ENCODE measurements at regions of chr7 and their contacts with region 1.

Region 1: DNA sequence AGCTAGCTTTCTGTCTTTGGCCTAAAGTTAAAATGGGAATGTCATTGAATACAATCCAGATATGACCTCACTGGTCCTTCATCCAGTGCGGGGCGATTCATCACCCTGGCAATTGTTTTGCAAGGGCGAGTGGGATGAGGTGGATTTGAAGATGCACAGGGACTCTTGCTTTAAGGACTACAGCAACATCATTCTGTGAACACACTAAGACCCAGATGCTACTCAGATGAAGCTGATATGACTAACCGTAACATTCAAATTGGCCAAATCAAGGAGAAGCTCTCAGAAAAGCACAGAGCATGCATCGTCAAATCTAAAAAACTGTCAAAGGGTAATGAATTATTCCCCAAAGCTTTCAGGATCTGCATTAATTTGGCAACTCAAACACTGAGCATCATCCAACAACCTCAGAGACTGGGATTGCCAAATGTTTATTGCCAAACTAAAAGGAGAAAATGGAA is 12.8 kb downstream of the CPA1 start:
- DNase-seq: no peak
- ATAC-seq: no peak
- H3K4me3 ChIP-seq: no peak overlapping the region
- H3K4me3 Mint-ChIP-seq: peak overlapping the region in 5 of 10 donors; percentile 13 to 84 (median 76)
- H3K27ac ChIP-seq: no peak overlapping the region
- H3K27ac Mint-ChIP-seq: peak overlapping the region in 7 of 9 donors; percentile 14 to 93 (median 88)
- H3K4me1 ChIP-seq: peaks cover 0 to 14% of the 10 kb centered on the region in 2 donors
- H3K4me1 Mint-ChIP-seq: peaks cover 19 to 40% (median 34%) of the 10 kb centered on the region in 7 donors
- H3K27me3 ChIP-seq: no peaks in the 10 kb centered on the region
- H3K27me3 Mint-ChIP-seq: no peaks in the 10 kb centered on the region

Region 2: DNA sequence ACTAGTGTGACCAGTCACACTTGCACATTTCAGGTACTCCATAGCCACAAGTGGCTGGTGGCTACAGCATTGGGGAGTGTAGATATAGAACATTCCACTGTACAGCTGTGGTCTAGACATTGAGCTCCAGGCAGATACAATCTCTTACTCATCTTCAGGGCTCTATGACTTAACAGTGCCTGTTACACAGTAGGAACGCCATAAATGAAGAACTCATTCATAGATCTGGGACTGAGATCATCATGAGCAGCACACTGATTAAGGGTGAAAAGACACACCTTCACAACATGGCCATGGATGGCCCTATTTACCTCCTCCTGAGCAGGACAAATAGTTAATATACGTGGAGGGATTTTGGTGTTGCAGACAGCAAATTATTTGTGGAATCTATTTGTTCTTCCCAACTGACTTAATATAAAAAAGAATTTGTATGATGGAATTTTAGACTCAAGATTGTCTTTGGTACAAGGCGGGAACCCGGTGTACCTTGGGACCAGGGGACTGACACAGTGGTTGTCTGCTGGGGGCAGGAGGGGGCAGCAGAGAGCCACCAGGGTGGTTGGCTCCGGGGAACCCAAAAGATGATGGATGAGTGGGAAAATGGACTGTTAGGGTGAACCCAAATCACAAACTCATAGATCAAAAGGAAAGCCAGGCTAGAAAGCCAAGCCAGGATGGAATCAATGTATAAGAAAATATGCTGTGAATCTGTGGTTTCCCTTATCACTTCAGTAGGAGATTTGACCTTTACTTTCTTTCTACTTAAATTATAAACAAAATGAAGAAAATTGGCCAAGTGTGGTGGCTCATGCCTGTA is 150.7 kb before region 1 on chr7:
- CTCF ChIA-PET with region 1: no interaction called
- POLR2A ChIA-PET with region 1: no interaction called
- intact Hi-C with region 1: loop called in 1 of 2 experiments (anchors 5 kb)
- DNase-seq: peak; percentile 35 to 67 (median 47)
- ATAC-seq: peak; percentile 77
- H3K4me3 ChIP-seq: no peak overlapping the region
- H3K4me3 Mint-ChIP-seq: peak overlapping the region in 1 of 10 donors; percentile 66
- H3K27ac ChIP-seq: no peak overlapping the region
- H3K27ac Mint-ChIP-seq: peak overlapping the region in 1 of 9 donors; percentile 68
- H3K4me1 ChIP-seq: no peaks in the 10 kb centered on the region
- H3K4me1 Mint-ChIP-seq: peaks cover 0 to 12% (median 8%) of the 10 kb centered on the region in 7 donors
- H3K27me3 ChIP-seq: no peaks in the 10 kb centered on the region
- H3K27me3 Mint-ChIP-seq: peaks cover 0 to 11% (median 0%) of the 10 kb centered on the region in 5 donors

Region 3: DNA sequence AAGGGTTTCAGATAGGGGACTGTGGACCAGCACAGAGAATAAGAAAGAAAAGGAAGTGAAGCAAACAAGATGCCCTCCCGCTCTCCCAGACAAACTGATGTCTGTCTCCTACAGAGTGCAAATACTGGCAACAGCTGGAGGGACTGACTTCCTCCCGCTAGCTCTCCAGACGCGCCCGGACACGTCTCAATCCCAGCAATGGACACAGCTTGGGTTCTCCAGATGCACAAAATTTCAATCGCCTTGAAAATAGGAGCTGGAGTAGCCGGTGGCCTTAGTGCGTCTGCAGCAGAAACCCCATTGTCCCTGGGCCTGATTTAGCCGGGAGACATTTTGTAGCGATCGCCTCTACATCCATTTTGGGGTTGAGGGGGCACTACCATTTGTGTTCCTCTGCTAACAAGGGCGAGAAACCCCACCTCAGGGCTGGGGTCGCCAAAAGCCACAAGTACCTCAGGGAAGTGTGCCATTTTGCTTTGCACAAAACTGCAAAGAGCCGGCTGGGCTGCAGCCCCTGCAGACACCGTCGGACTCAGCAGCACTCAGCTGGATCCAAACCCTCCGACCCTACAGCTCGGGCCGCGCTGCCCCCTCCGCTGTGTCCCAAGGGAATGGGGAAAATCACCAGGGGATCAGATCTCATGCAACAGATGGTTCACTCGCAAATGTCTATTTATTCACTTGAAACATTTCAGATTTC is 120.6 kb before region 1 on chr7:
- CTCF ChIA-PET with region 1: no interaction called
- POLR2A ChIA-PET with region 1: no interaction called
- intact Hi-C with region 1: no loop called
- DNase-seq: no peak
- ATAC-seq: no peak
- H3K4me3 ChIP-seq: peak overlapping the region; percentile 28
- H3K4me3 Mint-ChIP-seq: peak overlapping the region in 9 of 10 donors; percentile 25 to 91 (median 78)
- H3K27ac ChIP-seq: no peak overlapping the region
- H3K27ac Mint-ChIP-seq: peak overlapping the region in 3 of 9 donors; percentile 14 to 40 (median 15)
- H3K4me1 ChIP-seq: peaks cover 0 to 5% of the 10 kb centered on the region in 2 donors
- H3K4me1 Mint-ChIP-seq: peaks cover 0 to 29% (median 13%) of the 10 kb centered on the region in 7 donors
- H3K27me3 ChIP-seq: no peaks in the 10 kb centered on the region
- H3K27me3 Mint-ChIP-seq: peaks cover 0 to 6% (median 0%) of the 10 kb centered on the region in 5 donors

Region 4: GRCh38 chr7:130421684-130422083 is 28.6 kb after region 1 on chr7:
- CTCF ChIA-PET with region 1: no interaction called
- POLR2A ChIA-PET with region 1: interaction called, 6 read pairs
- intact Hi-C with region 1: loop called in 1 of 2 experiments (anchors 1 kb)
- DNase-seq: no peak
- ATAC-seq: no peak
- H3K4me3 ChIP-seq: no peak overlapping the region
- H3K4me3 Mint-ChIP-seq: peak overlapping the region in 9 of 10 donors; percentile 10 to 75 (median 64)
- H3K27ac ChIP-seq: peak overlapping the region; percentile 23
- H3K27ac Mint-ChIP-seq: peak overlapping the region; percentile 6 to 94 (median 68)
- H3K4me1 ChIP-seq: peaks cover 0 to 68% of the 10 kb centered on the region in 2 donors
- H3K4me1 Mint-ChIP-seq: peaks cover 32 to 88% (median 85%) of the 10 kb centered on the region in 7 donors
- H3K27me3 ChIP-seq: no peaks in the 10 kb centered on the region
- H3K27me3 Mint-ChIP-seq: no peaks in the 10 kb centered on the region

Region 5: DNA sequence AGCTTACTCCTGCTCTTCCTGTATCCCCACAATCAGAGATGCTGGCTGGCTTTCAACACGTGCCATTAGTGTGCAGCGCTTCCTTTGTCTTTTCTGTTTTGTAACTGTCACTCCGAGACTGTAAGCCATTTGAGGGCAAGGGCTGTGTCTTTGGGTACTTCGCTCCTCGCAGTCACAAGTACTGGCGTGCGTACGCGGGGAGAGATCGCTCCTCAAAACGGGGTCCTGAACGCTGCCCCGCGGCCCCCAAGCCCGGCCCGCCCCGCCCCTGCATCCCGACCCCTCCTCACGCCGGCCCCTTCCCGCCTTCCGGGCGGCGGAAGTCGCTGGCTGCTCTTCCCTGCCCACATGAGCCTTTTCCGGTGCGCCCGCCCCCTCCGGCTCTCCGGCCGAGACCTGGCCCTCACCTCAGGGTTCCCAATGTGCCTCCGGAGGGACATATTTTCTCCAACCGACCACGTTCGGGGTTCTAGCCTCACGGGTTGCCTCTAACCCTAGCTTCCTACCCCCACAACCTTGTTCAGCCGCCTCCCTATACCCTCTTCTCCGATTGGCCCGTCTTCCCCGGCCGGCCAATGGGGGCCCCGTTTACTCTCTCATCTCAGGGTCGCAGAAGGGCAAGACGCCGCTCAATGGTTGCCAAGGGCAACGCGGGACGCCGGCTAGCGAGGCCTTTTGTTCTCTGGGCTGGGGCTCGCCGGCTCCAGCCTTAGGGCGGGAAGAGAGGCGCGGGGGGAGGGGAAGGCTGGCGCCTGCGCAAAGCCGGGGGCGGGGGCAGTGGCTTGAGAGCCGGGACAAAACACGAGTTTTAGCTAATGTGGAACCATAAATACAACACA is 47.6 kb after region 1 on chr7 and contains the start of gene CEP41:
- CTCF ChIA-PET with region 1: no interaction called
- POLR2A ChIA-PET with region 1: interaction called, 14 read pairs
- intact Hi-C with region 1: loop called in 1 of 2 experiments (anchors 1 kb)
- DNase-seq: peak; percentile 85 to 90 (median 89)
- ATAC-seq: peak; percentile 98
- H3K4me3 ChIP-seq: peak within 1 kb of the TSS; percentile 87
- H3K4me3 Mint-ChIP-seq: peak within 1 kb of the TSS; percentile 95 to 100 (median 98)
- H3K27ac ChIP-seq: peak within 1 kb of the TSS; percentile 76
- H3K27ac Mint-ChIP-seq: peak within 1 kb of the TSS; percentile 95 to 99 (median 96)
- H3K4me1 ChIP-seq: peaks cover 4 to 26% of the 10 kb centered on the region in 2 donors
- H3K4me1 Mint-ChIP-seq: peaks cover 26 to 71% (median 59%) of the 10 kb centered on the region in 7 donors
- H3K27me3 ChIP-seq: no peaks in the 10 kb centered on the region
- H3K27me3 Mint-ChIP-seq: peaks cover 0 to 4% (median 0%) of the 10 kb centered on the region in 5 donors
- total RNA-seq, gene CEP41: 6.9 to 16.0 (median 12.6) TPM

Region 6: DNA sequence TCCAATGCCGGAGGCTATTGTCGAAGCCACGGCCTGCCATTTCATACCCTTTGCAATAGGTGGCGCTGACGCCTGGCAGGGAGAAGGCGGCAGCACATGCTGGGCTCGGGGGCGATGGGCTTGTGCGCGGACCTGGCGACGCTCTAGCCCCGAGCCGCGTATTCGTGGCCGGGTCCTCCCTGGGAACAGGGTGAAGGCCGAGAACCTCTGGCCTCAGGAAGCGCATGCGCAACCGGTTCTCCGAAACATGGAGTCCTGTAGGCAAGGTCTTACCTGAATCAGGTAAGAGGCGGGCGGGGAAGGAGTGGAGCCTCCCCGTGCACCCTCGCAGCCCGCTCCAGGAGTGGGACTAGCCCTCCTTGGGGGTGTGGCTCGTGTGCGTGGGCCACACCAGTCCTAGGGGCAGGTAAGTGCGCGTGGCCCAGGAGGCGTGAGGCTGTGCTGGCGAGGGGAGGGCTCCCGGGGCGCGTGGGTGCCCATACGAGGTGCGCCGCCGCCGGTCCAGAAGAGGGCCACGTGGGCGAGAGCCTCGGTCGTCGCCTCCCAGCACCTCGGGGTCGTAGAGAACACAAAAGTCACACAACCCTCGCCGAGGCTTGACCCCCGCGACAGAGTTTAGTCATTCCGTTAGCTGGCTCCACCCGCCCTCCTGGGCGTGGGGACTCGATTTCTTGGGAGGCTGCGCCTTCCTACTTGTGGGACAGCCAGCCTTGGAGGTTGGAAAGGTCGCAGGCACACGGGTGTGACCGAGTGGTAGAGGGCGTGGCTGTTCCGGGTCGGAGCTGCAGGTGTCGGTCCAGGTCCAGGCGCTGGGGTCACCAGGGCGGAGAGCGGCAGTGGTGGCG is 93.2 kb after region 1 on chr7:
- CTCF ChIA-PET with region 1: interaction called, 5 read pairs
- POLR2A ChIA-PET with region 1: interaction called, 3 read pairs
- intact Hi-C with region 1: loop called in 1 of 2 experiments (anchors 1 kb)
- DNase-seq: peak; percentile 34 to 73 (median 56)
- ATAC-seq: peak; percentile 88
- H3K4me3 ChIP-seq: peak overlapping the region; percentile 80
- H3K4me3 Mint-ChIP-seq: peak overlapping the region; percentile 85 to 94 (median 91)
- H3K27ac ChIP-seq: peak overlapping the region; percentile 41
- H3K27ac Mint-ChIP-seq: peak overlapping the region in 5 of 9 donors; percentile 58 to 88 (median 73)
- H3K4me1 ChIP-seq: peaks cover 7 to 9% of the 10 kb centered on the region in 2 donors
- H3K4me1 Mint-ChIP-seq: peaks cover 22 to 32% (median 25%) of the 10 kb centered on the region in 7 donors
- H3K27me3 ChIP-seq: no peaks in the 10 kb centered on the region
- H3K27me3 Mint-ChIP-seq: peaks cover 5 to 66% (median 31%) of the 10 kb centered on the region in 5 donors